ENCODE measurements at regions of chr19 and their contacts with region 1.

Region 1: DNA sequence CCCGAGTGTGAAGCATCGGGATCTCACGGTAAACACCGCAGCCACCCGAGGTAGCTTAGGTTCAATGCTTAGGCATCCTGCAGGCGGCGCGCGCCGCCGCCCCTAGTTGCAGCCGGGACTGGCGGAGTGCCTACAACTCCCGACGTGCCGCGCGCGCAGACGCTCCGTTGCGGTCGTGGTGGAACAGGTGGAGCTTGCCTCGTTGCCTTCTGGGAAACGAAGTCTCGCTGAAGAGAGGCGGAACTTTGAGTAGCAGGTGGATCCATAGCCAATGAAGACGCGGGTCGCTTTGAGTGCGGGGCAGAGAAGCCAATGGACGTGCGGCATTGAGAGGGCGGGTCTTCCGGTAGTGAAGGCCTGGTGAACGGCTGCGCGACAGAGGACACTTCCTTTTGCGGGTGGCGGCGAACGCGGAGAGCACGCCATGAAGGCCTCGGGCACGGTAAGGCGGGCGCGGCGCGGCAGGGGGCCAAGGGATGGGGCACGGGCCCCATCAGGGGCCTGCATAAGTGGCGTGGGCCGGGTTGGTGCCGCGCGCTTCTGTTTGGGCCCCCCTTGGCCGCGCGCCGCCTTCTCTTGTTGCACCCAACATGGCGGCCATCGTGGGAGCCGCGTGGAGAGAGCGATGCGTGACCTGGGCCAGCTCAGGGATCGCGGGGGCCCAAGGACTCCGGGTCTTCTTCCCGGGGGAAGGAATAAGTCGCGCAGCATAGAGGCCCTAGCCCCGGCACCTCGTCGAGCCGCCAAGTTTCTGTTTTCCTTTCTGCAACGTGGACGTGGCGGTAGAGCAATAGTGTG is at the start of gene RPL18A:
- DNase-seq: peak; percentile 100
- ATAC-seq: peak; percentile 87
- H3K4me3 ChIP-seq: peak within 1 kb of the TSS; percentile 82 to 93
- H3K27ac ChIP-seq: peak within 1 kb of the TSS; percentile 84
- H3K4me1 ChIP-seq: peaks cover 30 to 54% of the 10 kb centered on the region in 2 experiments
- H3K27me3 ChIP-seq: no peaks in the 10 kb centered on the region
- CTCF ChIP-seq: peak; percentile 70 to 87 (median 78)
- POLR2A ChIP-seq: peak; percentile 43
- RAD21 ChIP-seq: peak; percentile 91
- total RNA-seq, gene RPL18A: 3,525 TPM

Region 2: DNA sequence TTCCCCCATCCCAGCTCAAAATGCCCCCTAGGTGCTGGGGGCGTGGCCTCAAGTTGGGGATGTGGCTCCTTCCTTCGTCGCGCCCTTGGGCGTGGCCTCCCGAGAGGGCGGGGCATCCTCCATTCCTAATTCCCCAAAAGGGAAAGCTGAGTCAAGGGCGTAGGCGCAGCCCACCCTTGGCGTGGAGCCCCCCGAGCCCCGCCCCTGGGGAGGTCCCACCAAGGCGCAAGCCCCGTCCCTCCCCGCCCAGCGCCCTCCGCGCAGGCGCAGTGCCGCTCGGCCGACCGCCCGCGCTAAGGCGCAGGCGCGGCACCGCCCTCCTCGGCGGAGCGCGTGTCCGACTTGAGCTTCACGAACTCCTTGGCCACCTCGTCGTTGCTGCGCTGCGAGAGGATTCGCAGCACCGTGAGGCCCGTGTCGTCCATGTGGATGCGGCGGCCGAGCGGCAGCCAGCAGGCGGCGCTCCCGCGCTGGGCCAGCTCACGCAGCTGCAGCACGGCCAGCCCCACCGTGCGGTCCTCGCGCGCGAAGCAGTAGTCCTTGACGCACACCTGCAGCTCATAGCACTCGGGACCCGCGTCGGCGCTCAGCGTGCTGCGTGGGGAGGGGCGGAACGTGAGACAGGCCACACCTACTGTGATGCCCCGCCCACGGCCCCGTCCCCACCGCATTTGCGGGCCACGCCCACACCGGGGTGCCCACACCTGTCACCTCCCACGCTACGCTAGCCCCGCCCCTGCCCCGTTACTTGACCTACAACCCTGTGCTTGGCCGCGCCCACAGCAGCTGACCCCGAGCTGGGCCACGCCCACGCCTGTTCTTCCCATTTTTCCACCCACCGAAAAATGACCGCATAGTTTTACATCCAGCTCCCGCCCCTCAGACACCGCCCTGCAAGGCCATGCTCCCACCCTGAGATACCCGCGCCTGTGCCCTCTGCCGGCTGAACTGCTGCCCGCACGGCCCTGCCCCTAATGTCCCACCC is 253.7 kb before region 1 on chr19:
- CTCF ChIA-PET with region 1: interaction called, 5 read pairs
- POLR2A ChIA-PET with region 1: interaction called, 10 read pairs
- RAD21 ChIA-PET with region 1: no interaction called
- intact Hi-C with region 1: no loop called
- DNase-seq: peak; percentile 92
- ATAC-seq: peak; percentile 94
- H3K4me3 ChIP-seq: peak overlapping the region; percentile 7 to 37; a peak in 2 of 4 replicates
- H3K27ac ChIP-seq: peak overlapping the region; percentile 87
- H3K4me1 ChIP-seq: peaks cover 8 to 19% of the 10 kb centered on the region in 2 experiments
- H3K27me3 ChIP-seq: no peaks in the 10 kb centered on the region
- CTCF ChIP-seq: peak; percentile 68 to 94 (median 88)
- POLR2A ChIP-seq: peak; percentile 86
- RAD21 ChIP-seq: peak; percentile 75

Region 3: DNA sequence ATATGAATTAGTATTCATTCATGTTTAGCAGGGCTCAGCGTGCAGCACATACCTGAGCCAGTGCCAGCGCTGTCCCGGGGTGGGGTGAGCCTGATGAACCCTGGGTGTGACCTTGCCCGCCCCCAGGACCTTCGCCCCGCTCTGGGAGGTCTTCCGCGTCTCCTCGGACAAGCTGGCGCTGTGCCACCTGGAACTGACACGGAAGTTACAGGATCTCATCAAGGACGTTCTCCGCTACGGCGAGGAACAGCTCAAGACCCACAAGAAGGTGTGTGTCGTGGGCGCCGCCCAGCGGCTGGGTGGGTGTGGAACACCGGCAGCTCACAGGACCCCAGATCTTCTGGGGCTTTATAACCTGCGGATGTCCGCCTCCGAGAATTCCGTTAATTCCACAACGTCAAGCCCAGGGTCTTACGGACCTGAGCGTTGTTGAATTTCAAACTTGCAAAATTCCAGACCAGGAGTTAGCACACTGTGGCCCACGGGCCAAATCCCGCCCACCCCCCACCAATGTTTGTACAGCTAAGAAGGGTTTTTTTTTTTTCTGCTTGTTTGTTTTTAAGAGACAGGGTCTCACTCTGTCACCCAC is 93.1 kb before region 1 on chr19:
- CTCF ChIA-PET with region 1: interaction called, 13 read pairs
- POLR2A ChIA-PET with region 1: interaction called, 4 read pairs
- RAD21 ChIA-PET with region 1: interaction called in 1 of 2 experiments, 5 read pairs
- intact Hi-C with region 1: loop called (anchors 1 kb)
- DNase-seq: peak; percentile 88
- ATAC-seq: peak; percentile 91
- H3K4me3 ChIP-seq: peak overlapping the region; percentile 42 to 50
- H3K27ac ChIP-seq: peak overlapping the region; percentile 39; the same call in 1 of the 2 replicates
- H3K4me1 ChIP-seq: peaks cover 20 to 32% of the 10 kb centered on the region in 2 experiments
- H3K27me3 ChIP-seq: no peaks in the 10 kb centered on the region
- CTCF ChIP-seq: peak; percentile 81 to 94 (median 93)
- POLR2A ChIP-seq: no peak
- RAD21 ChIP-seq: peak; percentile 98

Region 4: DNA sequence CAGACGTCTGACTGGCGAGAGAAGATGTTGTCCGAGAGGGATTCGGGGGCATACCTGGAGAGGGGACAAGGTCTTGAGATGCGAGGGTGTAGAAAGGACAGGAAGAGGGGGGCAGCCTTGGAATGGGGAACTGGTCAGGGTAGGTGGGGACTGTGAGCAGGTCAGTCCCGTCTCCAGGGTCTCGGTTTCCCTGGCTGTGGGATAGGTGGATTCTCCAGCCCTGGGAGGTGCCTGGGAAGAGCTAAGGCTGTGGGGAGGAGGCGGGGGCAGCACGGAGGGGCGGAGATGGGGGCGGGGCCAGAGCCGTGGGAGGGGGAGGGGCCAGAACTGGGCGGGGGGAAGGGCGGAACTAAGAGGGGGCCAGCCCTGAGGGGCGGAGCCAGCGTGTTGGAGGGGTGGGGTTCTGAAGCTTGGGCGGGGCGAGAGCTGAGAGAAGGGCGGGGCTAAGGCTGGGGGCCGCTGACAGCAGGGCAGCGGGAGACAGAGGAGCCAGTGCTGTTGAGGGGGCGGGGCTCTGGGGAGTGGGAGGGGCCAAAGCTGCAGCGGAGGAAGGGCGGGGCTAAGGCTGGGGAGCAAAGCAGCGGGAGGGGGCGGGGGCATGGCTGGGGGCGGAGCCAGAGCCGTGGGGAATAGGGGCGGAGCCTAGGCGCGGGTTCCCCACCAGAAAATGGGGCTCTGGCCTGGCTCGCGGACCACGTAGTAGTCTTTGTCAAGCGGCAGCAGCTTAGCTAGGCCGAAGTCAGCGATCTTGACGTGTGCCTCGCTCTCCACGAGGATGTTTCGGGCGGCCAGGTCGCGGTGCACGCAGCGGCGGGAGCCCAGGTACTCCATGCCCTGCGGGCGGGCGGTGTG is 28.9 kb before region 1 on chr19:
- CTCF ChIA-PET with region 1: interaction called, 17 read pairs
- POLR2A ChIA-PET with region 1: interaction called, 37 read pairs
- RAD21 ChIA-PET with region 1: interaction called, 4 to 5 read pairs
- intact Hi-C with region 1: no loop called
- DNase-seq: peak; percentile 91
- ATAC-seq: peak; percentile 85
- H3K4me3 ChIP-seq: peak overlapping the region; percentile 66 to 74
- H3K27ac ChIP-seq: peak overlapping the region; percentile 97
- H3K4me1 ChIP-seq: peaks cover 15 to 34% of the 10 kb centered on the region in 2 experiments
- H3K27me3 ChIP-seq: no peaks in the 10 kb centered on the region
- CTCF ChIP-seq: no peak
- POLR2A ChIP-seq: no peak
- RAD21 ChIP-seq: no peak

Region 5: GRCh38 chr19:17848595-17849292 is 11.0 kb before region 1 on chr19:
- CTCF ChIA-PET with region 1: interaction called, 14 read pairs
- POLR2A ChIA-PET with region 1: interaction called, 18 read pairs
- RAD21 ChIA-PET with region 1: interaction called in 1 of 2 experiments, 3 read pairs
- intact Hi-C with region 1: no loop called
- DNase-seq: no peak
- ATAC-seq: no peak
- H3K4me3 ChIP-seq: no peak overlapping the region
- H3K27ac ChIP-seq: no peak overlapping the region
- H3K4me1 ChIP-seq: peaks cover 4 to 15% of the 10 kb centered on the region in 2 experiments; a peak in 3 of 4 replicates
- H3K27me3 ChIP-seq: no peaks in the 10 kb centered on the region
- CTCF ChIP-seq: no peak
- POLR2A ChIP-seq: no peak
- RAD21 ChIP-seq: no peak

Region 6: GRCh38 chr19:17932485-17933338 is 73.0 kb after region 1 on chr19 and contains the start of gene CCDC124:
- CTCF ChIA-PET with region 1: interaction called, 73 read pairs
- POLR2A ChIA-PET with region 1: interaction called, 61 read pairs
- RAD21 ChIA-PET with region 1: interaction called, 11 to 15 read pairs
- intact Hi-C with region 1: loop called (anchors 1 kb)
- DNase-seq: peak; percentile 88
- ATAC-seq: peak; percentile 87
- H3K4me3 ChIP-seq: peak within 1 kb of the TSS; percentile 87 to 98
- H3K27ac ChIP-seq: peak within 1 kb of the TSS; percentile 86
- H3K4me1 ChIP-seq: peaks cover 15 to 22% of the 10 kb centered on the region in 2 experiments
- H3K27me3 ChIP-seq: no peaks in the 10 kb centered on the region
- CTCF ChIP-seq: peak; percentile 94 to 97 (median 97)
- POLR2A ChIP-seq: peak; percentile 41
- RAD21 ChIP-seq: peak; percentile 100
- total RNA-seq, gene CCDC124: 177 TPM

Measured in HCT116 (cell line).